Ascending aorta (tissue), 2 donors: ENCODE measurements at regions of chrX and their contacts with region 1.

Region 1: DNA sequence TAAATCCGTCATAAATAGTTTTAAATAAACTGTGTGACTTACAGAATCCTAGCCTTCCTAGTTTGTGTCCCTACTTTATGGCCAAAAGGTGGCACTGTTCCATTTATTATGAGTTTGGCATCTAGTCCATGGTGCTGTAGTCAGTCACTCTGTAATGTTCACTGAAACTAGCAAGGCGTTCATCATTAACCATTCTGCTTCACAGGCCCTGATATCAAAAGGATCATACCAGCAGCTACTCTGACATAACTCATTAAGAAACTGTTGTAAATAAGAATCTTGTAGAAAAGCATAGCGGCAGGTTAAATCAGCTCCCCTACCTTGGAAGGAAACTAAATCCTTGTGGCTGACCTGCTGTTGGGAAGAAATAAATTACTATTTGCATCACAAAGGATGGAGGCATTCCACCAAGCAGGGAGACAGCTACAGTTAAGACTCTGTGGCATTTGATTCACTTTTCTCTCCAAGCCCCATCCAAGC is 919.6 kb upstream of the DIAPH2 start:
- DNase-seq: no peak
- H3K4me3 ChIP-seq: no peak overlapping the region
- H3K27ac ChIP-seq: no peak overlapping the region
- H3K4me1 ChIP-seq: no peaks in the 10 kb centered on the region
- H3K27me3 ChIP-seq: no peaks in the 10 kb centered on the region
- CTCF ChIP-seq: peak in 2 of 3 experiments; percentile 23 to 50

Region 2: DNA sequence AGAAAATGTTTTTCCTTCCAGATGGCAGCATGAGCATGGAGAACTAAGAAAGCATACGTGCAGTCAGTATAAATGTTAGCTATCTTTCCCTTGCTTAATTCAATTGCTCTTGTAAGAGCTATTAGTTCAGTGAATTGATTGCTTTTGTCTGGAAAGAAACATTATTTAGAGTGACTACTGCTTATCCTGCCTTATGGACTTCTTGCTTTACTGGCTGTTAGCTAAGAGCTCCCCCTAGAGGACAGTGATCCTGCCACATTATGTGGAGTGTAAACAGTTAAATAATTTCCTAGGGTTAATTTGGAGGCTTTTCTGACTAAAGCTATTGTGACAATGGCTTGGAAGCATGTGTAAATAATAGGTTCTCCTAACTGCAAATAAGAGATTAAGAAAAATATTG is 688.6 kb before region 1 on chrX:
- intact Hi-C with region 1: no loop called
- DNase-seq: no peak
- H3K4me3 ChIP-seq: no peak overlapping the region
- H3K27ac ChIP-seq: no peak overlapping the region
- H3K4me1 ChIP-seq: no peaks in the 10 kb centered on the region
- H3K27me3 ChIP-seq: no peaks in the 10 kb centered on the region
- CTCF ChIP-seq: peak in 1 of 3 experiments; percentile 28

Region 3: DNA sequence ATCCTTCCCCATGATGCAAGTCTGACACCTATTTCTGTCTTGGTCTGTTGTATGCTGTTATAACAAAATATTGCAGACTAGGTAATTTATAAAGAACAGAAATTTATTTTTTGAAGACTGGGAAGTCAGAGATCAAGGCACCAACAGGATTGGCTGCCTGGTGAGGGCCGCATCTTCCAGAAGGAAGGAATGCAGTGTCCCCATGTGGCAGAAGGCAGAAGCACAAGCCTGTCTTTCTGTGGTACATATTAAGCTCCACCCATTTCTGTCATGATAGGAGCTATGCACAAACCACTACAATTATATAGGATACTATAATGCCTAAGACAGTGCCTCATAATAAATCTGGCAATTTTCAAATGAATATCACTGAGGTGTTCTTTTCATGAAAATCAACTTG is 417.4 kb after region 1 on chrX:
- intact Hi-C with region 1: loop called (anchors 5 kb)
- DNase-seq: no peak
- H3K4me3 ChIP-seq: no peak overlapping the region
- H3K27ac ChIP-seq: no peak overlapping the region
- H3K4me1 ChIP-seq: no peaks in the 10 kb centered on the region
- H3K27me3 ChIP-seq: no peaks in the 10 kb centered on the region
- CTCF ChIP-seq: peak in 2 of 3 experiments; percentile 19 to 41